AG04449 (cell line): ENCODE measurements at regions of chr1 and their contacts with region 1.

Region 1: DNA sequence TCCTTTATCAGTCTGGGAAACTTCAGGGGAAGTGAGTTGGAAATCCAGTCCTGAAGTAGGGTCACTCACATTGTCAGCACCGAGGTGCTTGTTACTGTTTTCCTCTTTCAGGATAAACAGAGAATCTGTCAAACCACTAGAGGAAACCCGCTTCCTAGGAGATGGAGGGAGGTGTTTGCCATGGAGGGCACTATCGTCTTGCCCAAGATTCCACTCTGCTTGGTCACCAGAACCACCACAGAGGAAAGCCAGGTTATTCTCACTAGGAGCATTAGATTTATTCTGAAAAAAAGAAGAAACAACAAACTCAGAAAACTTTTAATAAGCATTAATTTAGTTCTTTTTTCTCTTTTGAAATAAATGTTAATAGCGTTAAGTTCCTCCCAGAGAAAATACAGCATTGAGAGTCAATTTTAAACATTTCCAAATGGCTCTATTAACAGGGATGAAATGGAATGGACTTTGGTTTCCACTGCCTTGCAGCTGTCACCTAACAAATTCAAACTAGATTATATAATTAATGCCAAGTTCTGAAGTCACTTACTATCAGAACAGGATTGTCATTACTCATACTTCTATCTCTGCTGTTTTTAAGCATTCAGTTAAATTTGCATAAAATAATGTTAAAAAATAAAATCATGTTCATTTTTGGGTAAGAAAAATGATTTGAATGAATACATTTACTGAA is 242.8 kb downstream of the CRB1 start:
- DNase-seq: no peak
- H3K4me3 ChIP-seq: no peak overlapping the region
- CTCF ChIP-seq: no peak

Region 2: GRCh38 chr1:197481101-197481500 is 29.7 kb before region 1 on chr1:
- CTCF ChIA-PET with region 1: no interaction called
- POLR2A ChIA-PET with region 1: no interaction called
- DNase-seq: no peak
- H3K4me3 ChIP-seq: no peak overlapping the region
- CTCF ChIP-seq: no peak

Region 3: GRCh38 chr1:197521118-197521739 is 10.4 kb after region 1 on chr1:
- CTCF ChIA-PET with region 1: interaction called, 15 read pairs
- POLR2A ChIA-PET with region 1: no interaction called
- DNase-seq: no peak
- H3K4me3 ChIP-seq: no peak overlapping the region
- CTCF ChIP-seq: peak; percentile 62

Region 4: DNA sequence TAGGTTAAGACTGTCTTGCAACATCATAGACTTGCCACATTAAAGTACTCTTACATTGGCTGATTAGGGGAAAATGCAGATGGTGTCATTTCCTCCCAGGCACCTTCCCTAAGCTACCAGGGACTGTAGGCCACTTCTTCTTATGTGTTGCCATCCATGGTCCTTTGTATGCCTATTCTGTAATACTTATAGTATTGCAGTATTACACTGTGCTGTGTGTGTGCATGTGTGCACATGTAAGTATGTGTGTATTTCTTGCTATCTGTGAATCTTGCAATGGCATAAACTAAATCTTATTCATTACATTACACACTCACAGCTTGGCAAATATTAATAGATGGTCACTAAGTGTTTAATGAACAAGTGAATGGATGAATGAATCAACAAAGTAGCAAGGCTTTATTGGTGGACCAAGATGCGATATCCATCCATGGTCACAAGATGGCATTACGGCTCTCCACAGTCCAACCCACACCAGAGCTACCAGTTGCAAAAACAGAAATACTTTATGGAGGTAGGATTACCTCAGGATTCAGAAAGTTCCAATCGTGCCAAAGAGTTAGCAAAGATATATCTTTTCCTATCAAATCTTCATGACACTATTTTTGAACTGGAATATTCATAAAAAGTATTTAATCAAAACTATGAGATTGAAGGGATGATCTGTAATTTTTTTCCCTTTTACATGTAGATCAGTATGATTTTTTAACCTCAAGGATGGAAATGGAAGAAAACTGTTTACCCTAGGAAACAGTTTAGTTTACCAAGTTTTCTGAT is 104.3 kb after region 1 on chr1:
- CTCF ChIA-PET with region 1: no interaction called
- POLR2A ChIA-PET with region 1: no interaction called
- DNase-seq: no peak
- H3K4me3 ChIP-seq: no peak overlapping the region
- CTCF ChIP-seq: peak; percentile 65